B cell (primary cell): ENCODE measurements at regions of chr19 and their contacts with region 1.

Region 1: DNA sequence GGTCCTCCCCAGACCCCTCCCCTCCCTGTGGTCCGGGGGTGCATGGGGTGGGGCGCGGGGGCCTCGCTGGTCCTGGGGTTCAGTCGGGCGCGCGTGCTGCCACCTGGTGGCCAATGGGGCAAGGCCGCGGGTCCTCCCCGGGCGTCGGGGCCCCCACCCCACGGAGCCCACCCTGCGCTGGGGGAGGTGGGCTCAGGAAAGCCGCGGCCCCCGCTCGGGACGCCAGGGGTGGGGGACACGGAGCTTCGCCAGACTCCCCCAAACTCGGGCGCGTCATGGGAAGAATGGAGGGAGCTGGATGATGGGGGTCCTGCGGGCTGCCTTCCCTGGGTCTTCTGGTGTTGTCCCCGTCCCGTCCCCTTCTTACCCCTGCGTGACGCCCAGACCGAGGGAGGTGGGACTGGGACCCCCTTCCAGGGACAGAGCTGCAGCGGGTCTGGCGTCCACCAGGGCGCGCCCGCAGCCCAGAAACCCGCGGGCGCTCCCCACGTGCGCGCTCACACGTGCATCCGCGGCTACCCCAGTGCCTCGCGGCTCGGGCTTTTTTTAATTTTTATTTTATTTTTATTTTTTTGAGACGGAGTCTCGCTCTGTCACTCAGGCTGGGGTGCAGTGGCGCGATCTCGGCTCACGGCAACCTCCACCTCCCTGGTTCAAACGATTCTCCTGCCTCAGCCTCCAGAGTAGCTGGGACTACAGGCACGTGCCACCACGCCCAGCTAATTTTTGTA is 19.8 kb upstream of the TCF3 start:
- DNase-seq: peak; percentile 75
- ATAC-seq: peak; percentile 20
- H3K4me3 ChIP-seq: peak overlapping the region in 4 of 5 experiments; percentile 43 to 64 (median 54)
- H3K4me3 Mint-ChIP-seq: peak overlapping the region; percentile 81
- H3K27ac ChIP-seq: no peak overlapping the region
- H3K27ac Mint-ChIP-seq: peak overlapping the region; percentile 59
- H3K4me1 ChIP-seq: peaks cover 28 to 54% of the 10 kb centered on the region in 2 donors
- H3K4me1 Mint-ChIP-seq: peaks cover 37% of the 10 kb centered on the region
- H3K27me3 ChIP-seq: peaks cover 0 to 41% (median 27%) of the 10 kb centered on the region in 4 experiments
- H3K27me3 Mint-ChIP-seq: peaks cover 24% of the 10 kb centered on the region
- CTCF ChIP-seq: peak; percentile 93

Region 2: GRCh38 chr19:1592755-1593500 is 79.3 kb before region 1 on chr19 and contains the start of gene MBD3:
- CTCF ChIA-PET with region 1: interaction called, 12 read pairs
- POLR2A ChIA-PET with region 1: interaction called, 10 read pairs
- intact Hi-C with region 1: no loop called
- DNase-seq: peak; percentile 93
- ATAC-seq: peak; percentile 87
- H3K4me3 ChIP-seq: peak within 1 kb of the TSS; percentile 36 to 90 (median 80)
- H3K4me3 Mint-ChIP-seq: peak within 1 kb of the TSS; percentile 93
- H3K27ac ChIP-seq: peak within 1 kb of the TSS; percentile 84 to 89
- H3K27ac Mint-ChIP-seq: peak within 1 kb of the TSS; percentile 89
- H3K4me1 ChIP-seq: peaks cover 17 to 34% of the 10 kb centered on the region in 2 donors
- H3K4me1 Mint-ChIP-seq: peaks cover 29% of the 10 kb centered on the region
- H3K27me3 ChIP-seq: no peaks in the 10 kb centered on the region
- H3K27me3 Mint-ChIP-seq: no peaks in the 10 kb centered on the region
- CTCF ChIP-seq: no peak
- total RNA-seq, gene MBD3: 84.6 and 87.6 TPM in 2 replicates

Region 3: GRCh38 chr19:1624458-1624857 is 47.7 kb before region 1 on chr19:
- CTCF ChIA-PET with region 1: interaction called, 40 read pairs
- POLR2A ChIA-PET with region 1: no interaction called
- intact Hi-C with region 1: loop called (anchors 2 kb)
- DNase-seq: peak; percentile 70
- ATAC-seq: peak; percentile 80
- H3K4me3 ChIP-seq: no peak overlapping the region
- H3K4me3 Mint-ChIP-seq: no peak overlapping the region
- H3K27ac ChIP-seq: no peak overlapping the region
- H3K27ac Mint-ChIP-seq: peak overlapping the region; percentile 74
- H3K4me1 ChIP-seq: peaks cover 0 to 15% of the 10 kb centered on the region in 2 donors
- H3K4me1 Mint-ChIP-seq: peaks cover 9% of the 10 kb centered on the region
- H3K27me3 ChIP-seq: no peaks in the 10 kb centered on the region
- H3K27me3 Mint-ChIP-seq: no peaks in the 10 kb centered on the region
- CTCF ChIP-seq: peak; percentile 77

Region 4: DNA sequence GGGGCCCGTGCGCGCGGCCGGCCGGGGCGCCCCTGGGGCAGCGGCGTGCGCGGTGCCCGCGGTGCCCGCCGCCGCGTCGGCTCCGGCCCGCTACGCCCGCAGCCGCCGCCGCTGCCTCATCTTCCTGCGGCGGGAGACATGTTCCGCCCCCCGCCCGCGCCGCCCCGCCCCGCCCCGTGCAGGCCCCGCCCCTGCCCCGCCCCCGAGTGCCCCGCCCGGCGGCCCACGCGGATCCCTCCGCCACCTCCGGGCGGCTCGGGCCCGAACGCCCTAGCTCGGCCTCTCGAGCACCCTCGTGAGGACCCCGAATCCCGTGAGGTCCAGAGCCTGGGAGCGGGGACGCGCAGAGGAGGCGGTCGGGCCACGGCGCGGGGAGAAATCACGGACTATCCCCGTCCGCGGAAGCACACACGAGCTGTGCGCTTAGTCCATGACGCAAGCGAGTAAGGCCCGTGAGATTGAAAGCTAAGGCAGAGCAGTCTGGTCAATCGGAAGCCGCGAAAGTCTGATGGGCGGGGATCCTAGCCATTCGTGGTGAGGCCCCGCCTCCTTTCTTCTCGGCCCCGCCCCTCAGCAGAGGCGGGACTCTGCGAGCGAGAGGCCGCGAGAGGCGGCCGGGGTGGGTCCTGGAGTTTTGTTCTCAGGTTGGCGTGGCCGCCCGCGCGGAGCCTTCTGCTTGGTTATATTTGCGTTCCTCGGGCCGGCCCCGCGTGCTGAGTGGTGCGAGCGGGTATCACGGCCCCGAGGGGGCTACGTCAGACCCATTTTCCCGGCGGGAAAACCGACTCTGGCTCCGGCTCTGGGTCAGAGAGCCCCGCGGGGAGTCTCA is 19.5 kb before region 1 on chr19 and contains the start of gene TCF3:
- CTCF ChIA-PET with region 1: interaction called, 114 read pairs
- POLR2A ChIA-PET with region 1: interaction called, 43 read pairs
- intact Hi-C with region 1: loop called (anchors 1 kb)
- DNase-seq: peak; percentile 100
- ATAC-seq: peak; percentile 82
- H3K4me3 ChIP-seq: peak within 1 kb of the TSS; percentile 62 to 90 (median 81)
- H3K4me3 Mint-ChIP-seq: peak within 1 kb of the TSS; percentile 96
- H3K27ac ChIP-seq: peak within 1 kb of the TSS; percentile 100
- H3K27ac Mint-ChIP-seq: peak within 1 kb of the TSS; percentile 99
- H3K4me1 ChIP-seq: peaks cover 39 to 73% of the 10 kb centered on the region in 2 donors
- H3K4me1 Mint-ChIP-seq: peaks cover 63% of the 10 kb centered on the region
- H3K27me3 ChIP-seq: no peaks in the 10 kb centered on the region
- H3K27me3 Mint-ChIP-seq: no peaks in the 10 kb centered on the region
- CTCF ChIP-seq: no peak
- total RNA-seq, gene TCF3: 263 and 278 TPM in 2 replicates

Region 5: DNA sequence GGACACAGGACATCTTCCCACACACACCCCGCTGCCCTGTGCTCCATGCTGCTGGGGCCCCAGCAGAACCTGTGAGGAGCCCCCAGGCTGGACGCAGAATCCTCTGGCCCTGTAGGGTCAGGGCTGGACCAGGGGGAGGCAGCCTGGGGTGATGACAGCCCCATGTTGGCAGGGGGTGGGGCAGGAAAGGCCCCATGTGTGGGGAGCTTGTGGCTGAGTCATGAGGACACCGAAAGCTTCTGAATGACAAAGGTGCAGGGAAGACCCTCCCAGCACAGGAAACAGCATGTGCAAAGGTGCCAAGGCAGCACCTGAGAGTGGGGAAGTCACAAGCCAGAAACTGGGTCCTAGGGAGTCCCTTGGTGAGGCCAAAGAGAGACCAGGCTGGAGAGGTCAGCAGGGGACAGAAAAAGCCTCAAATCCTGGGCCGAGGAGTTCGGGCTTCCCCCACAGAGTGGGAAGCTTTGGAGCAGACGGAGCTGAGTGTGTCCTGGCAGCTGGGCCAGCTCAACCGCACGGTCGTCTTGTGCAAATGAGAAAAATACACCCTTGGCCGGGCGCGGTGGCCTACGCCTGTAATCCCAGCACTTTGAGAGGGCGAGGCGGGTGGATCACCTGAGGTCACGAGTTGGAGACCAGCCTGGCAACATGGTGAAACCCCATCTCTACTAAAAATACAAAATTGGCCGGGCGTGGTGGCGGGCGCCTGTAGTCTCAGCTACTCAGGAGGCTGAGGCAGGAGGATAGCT is 122.4 kb after region 1 on chr19:
- CTCF ChIA-PET with region 1: interaction called, 18 read pairs
- POLR2A ChIA-PET with region 1: no interaction called
- intact Hi-C with region 1: no loop called
- DNase-seq: no peak
- ATAC-seq: no peak
- H3K4me3 ChIP-seq: no peak overlapping the region
- H3K4me3 Mint-ChIP-seq: no peak overlapping the region
- H3K27ac ChIP-seq: no peak overlapping the region
- H3K27ac Mint-ChIP-seq: no peak overlapping the region
- H3K4me1 ChIP-seq: peaks cover 8% of the 10 kb centered on the region in 2 donors
- H3K4me1 Mint-ChIP-seq: no peaks in the 10 kb centered on the region
- H3K27me3 ChIP-seq: peaks cover 0 to 37% (median 3%) of the 10 kb centered on the region in 4 experiments
- H3K27me3 Mint-ChIP-seq: peaks cover 4% of the 10 kb centered on the region
- CTCF ChIP-seq: no peak

Region 6: GRCh38 chr19:1929021-1929742 is 257.0 kb after region 1 on chr19:
- CTCF ChIA-PET with region 1: no interaction called
- POLR2A ChIA-PET with region 1: no interaction called
- intact Hi-C with region 1: no loop called
- DNase-seq: peak; percentile 87
- ATAC-seq: peak; percentile 80
- H3K4me3 ChIP-seq: peak overlapping the region in 4 of 5 experiments; percentile 40 to 63 (median 48)
- H3K4me3 Mint-ChIP-seq: peak overlapping the region; percentile 84
- H3K27ac ChIP-seq: no peak overlapping the region
- H3K27ac Mint-ChIP-seq: peak overlapping the region; percentile 80
- H3K4me1 ChIP-seq: peaks cover 33 to 47% of the 10 kb centered on the region in 2 donors
- H3K4me1 Mint-ChIP-seq: peaks cover 44% of the 10 kb centered on the region
- H3K27me3 ChIP-seq: no peaks in the 10 kb centered on the region
- H3K27me3 Mint-ChIP-seq: no peaks in the 10 kb centered on the region
- CTCF ChIP-seq: peak; percentile 96